AG04449 (cell line): ENCODE measurements at regions of chr2 and their contacts with region 1.

Region 1: GRCh38 chr2:104849618-104850141 is 4.2 kb upstream of the POU3F3 start:
- DNase-seq: peak; percentile 19
- H3K4me3 ChIP-seq: no peak overlapping the region
- CTCF ChIP-seq: peak; percentile 63

Region 2: DNA sequence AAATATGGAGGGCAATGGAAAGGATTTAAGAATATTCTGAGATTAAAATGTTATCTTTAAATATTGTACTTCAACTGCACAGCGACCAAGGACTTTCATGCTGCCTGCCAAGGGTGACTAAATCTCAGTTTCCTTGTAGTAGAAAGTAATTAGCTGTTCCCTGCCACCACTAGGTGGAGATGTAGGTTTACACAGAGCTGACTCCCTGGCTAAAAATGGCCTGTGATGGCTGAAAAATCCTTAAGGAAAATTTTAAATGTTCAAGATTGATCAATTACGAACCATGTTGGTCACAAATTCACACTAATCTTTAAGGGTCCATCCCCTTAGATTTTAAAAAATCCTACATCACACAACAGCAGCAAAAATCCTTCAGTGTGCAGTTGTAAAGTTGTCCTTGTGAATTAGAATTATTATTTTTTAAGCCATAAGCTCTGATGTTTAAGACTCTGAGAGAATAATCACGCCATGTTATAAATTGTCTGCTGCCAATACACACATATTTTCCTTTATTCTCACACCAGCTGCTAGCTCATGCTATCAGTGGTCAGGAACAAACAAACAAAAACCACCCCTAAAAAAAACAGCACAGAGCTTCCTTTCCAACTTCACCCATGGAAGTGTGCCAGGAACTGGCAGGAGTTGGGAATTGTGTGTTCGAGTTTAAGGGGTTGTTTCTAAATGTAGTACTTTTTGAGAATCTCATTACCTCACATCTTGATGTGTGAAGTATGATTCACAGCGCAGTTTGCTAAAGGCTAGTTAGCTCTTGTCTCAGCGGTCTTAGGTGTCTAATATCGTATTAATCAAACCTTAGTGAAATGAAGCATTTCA is 1688.0 kb before region 1 on chr2:
- CTCF ChIA-PET with region 1: interaction called, 14 read pairs
- POLR2A ChIA-PET with region 1: no interaction called
- DNase-seq: no peak
- H3K4me3 ChIP-seq: no peak overlapping the region
- CTCF ChIP-seq: peak; percentile 33

Region 3: DNA sequence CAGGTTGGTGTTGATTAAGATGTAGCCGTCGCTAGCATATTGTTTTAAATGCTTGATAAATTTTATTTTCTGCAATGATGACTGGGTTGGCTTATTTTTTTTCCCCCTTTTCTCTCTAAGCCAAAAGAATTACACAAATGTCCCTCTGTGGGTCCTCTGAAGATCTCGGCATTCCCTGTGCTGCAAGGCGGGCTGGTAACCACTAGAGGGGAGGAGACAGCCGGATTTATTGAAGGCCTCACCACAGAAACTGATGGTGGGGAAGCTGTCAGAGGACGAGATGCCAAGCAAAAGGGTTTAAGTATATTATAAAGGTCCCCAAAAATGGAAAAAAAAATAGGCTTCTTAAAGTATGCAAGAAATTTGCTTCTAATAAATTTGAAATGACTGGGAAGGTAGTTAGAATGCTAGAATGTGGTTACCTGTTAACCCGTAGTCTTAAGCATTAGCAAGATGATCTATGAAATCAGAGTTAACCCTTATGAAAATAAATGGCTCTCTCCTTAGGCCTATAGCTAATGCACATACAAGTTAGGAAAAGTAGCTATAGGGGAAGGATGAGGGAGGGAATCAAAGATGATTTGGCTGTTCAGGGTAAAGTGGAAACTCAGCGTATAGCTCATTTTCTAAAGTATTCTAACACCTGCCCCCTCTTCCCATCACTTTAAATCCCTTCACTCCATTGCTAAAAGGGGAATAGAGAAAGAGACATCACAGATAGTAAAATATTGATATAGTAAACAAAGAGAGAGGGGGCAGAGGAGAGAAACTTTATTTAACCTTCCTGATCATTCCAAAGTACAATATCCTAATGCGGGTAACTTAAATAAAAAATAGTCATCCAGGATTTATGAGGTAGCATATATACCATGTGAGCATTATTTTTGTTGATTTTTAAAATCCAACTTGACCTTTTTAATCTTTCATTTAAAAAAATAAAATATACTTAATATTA is 890.2 kb before region 1 on chr2:
- CTCF ChIA-PET with region 1: interaction called, 10 read pairs
- POLR2A ChIA-PET with region 1: no interaction called
- DNase-seq: no peak
- H3K4me3 ChIP-seq: no peak overlapping the region
- CTCF ChIP-seq: peak; percentile 16

Region 4: DNA sequence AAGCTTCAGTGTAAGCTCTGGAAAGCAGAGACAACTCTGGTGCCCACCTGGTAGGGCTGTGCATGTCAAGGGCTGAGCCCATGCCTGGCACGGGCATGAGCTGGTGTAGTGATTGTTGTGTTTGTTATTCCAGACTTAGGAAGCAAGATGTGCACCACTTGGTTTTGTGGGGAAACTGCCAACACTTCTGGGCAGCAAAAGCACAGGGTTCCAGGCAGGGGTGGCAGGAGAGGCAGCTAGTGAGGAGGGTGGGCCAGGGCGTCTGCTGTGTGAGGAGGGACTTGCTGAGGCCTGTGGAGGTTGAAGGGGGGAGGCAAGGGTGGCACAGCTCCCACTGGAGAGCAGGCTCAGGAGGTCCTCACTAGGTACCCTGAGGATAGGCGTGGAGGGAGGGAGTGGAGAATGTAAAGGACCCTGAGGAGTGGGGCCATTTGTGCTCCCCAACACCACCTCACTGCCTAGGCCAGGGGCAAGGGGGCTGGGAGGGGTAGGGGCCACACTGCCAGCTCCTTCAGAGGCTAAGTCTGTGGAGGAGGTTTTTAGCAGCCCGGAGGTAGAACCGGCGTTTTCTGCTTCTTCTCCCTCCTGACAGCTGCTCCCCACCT is 99.7 kb before region 1 on chr2:
- CTCF ChIA-PET with region 1: interaction called, 13 read pairs
- POLR2A ChIA-PET with region 1: no interaction called
- DNase-seq: no peak
- H3K4me3 ChIP-seq: no peak overlapping the region
- CTCF ChIP-seq: no peak

Region 5: DNA sequence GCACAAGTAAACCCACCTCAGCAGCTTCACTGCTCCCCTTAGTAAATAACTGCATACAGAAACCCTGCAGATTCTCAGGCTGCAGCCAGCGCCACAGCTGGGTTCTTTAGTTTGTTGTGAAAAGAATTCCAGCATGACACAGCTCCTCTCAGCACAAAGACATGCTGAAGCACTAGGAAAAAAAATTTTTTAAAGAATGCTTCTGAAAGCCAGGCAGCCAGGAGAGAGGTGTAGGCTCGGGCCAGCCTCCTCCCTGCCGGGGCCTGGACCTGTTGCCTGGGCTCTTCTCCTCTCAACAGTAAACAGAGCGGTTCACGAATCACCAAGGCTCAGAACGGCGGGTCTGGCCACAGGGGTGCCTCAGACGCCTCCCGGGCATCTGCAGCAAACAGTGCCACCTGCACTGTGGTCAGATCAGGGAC is 91.5 kb before region 1 on chr2:
- CTCF ChIA-PET with region 1: interaction called, 17 read pairs
- POLR2A ChIA-PET with region 1: no interaction called
- DNase-seq: no peak
- H3K4me3 ChIP-seq: no peak overlapping the region
- CTCF ChIP-seq: no peak

Region 6: DNA sequence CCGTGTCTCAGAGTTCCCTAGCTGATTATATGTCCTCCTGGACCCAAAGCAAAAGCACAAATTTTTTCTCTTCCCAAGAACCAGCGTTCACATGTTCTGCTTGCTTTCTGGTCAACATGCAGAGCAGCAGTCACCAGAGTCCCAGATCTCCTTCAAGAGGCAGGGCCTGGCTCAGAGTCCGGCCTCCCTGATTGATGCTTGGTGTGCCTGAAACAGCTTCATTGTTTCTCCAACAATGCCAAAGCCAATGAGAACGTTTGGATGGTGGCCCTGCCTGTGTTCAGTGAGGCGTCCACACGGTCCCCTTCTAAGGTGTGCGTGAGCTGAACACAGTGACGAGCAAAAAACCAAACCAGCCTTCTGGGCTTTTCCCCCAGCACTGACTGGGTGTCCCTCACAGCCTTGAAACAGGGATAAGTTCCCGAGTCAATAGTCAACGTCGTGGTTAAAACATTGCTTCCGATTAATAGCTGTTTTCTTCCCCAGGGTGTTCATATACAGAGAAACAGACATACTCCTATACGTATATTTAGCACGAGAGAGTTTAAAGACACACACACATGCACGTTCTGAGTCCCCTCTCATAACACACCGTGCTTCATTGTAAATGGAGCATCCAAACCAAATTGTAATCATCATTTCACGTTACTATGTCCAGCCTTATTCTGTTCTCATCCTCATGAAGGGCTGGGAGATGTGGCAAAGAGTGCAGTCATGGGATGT is 15.1 kb before region 1 on chr2:
- CTCF ChIA-PET with region 1: interaction called, 52 read pairs
- POLR2A ChIA-PET with region 1: no interaction called
- DNase-seq: no peak
- H3K4me3 ChIP-seq: no peak overlapping the region
- CTCF ChIP-seq: no peak

Region 7: DNA sequence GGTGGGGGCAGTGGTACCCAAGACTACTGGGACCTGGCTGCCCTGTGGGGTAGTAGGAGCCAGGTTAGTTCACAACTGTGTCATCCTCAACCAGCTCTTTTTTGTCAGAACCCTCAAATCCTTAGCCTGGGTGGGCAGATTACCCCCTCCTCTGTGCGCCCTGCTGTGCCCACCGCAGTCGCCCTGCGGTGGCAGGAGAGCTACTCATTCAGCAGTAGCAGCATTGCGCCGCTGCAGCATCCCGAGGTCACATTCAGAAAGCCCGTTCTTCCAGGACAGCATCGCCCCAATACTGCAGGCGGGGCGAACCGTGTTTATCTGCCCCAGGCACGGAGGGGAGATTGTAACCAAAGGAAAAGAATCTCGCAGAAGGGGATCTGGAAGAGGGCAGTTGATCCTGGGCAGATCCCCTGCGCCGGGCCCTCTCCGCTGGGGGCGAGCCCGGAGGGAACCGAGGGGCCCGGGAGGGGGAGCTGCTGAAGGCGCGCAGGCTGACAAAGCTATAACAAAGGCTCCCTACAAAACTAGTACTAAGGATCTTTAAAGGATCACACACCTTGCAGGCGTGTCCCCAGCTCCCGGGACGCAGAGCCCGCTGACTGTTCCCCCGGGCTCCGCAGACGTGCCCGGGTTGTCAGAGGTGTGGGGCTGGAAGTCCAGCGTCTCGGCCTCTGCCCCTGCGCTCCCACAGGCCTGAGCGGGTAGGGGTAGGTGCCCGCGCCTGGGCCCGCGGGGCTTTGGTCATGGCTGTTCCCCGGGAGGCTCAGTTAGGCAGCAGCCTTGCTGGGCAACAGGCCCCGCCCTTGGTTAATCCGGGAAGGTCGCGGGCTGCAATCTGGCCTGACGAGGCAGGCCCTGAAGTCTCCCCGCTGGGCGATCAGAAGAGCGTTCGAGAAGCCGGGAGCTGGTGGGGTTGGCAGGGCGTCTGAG is 17.5 kb after region 1 on chr2:
- CTCF ChIA-PET with region 1: interaction called, 10 read pairs
- POLR2A ChIA-PET with region 1: no interaction called
- DNase-seq: no peak
- H3K4me3 ChIP-seq: no peak overlapping the region
- CTCF ChIP-seq: no peak

Region 8: DNA sequence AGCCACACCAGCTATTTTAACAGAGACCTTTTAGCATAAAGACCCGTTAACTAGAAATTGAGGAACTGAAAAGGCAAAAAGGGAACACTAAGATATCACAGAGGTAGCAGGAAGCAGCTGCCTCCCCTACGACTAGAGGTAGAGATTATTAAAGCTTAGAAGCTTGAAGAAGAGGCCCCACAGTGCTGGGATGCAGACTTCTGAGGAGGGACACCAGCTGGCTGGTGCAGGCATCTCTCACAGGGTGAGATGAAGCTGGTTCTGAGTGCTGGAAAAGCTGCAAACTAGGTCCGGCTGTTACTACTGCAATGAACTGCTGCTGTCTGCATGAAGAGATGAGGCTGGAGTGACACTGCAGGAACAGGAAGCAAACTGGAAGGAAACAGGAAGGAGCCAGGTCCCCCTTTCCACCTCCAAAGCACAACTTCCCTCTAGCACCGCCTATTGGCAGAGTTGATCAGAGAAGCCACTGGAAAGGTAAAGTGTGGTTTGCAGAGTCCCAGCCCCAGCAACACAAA is 127.0 kb after region 1 on chr2:
- CTCF ChIA-PET with region 1: no interaction called
- POLR2A ChIA-PET with region 1: no interaction called
- DNase-seq: no peak
- H3K4me3 ChIP-seq: no peak overlapping the region
- CTCF ChIP-seq: no peak